Endothelial cell of umbilical vein (primary cell): ENCODE measurements at regions of chrX and their contacts with region 1.

Region 1: GRCh38 chrX:71532753-71533425 is at the start of gene OGT:
- DNase-seq: peak; percentile 93
- H3K4me3 ChIP-seq: peak within 1 kb of the TSS; percentile 56 to 89 (median 59)
- H3K27ac ChIP-seq: peak within 1 kb of the TSS; percentile 63
- H3K4me1 ChIP-seq: peaks cover 11% of the 10 kb centered on the region
- H3K27me3 ChIP-seq: no peaks in the 10 kb centered on the region
- CTCF ChIP-seq: no peak
- POLR2A ChIP-seq: peak; percentile 80
- total RNA-seq, gene OGT: 128 and 129 TPM in 2 replicates

Region 2: GRCh38 chrX:71492231-71493065 is 40.4 kb before region 1 on chrX:
- CTCF ChIA-PET with region 1: no interaction called
- POLR2A ChIA-PET with region 1: no interaction called
- dilution Hi-C with region 1: no loop called
- intact Hi-C with region 1: loop called (anchors 2 kb)
- DNase-seq: peak; percentile 40
- H3K4me3 ChIP-seq: peak overlapping the region; percentile 48 to 65 (median 58)
- H3K27ac ChIP-seq: no peak overlapping the region
- H3K4me1 ChIP-seq: peaks cover 4% of the 10 kb centered on the region
- H3K27me3 ChIP-seq: no peaks in the 10 kb centered on the region
- CTCF ChIP-seq: no peak
- POLR2A ChIP-seq: no peak

Region 3: GRCh38 chrX:71612256-71612655 is 79.4 kb after region 1 on chrX:
- CTCF ChIA-PET with region 1: no interaction called
- POLR2A ChIA-PET with region 1: no interaction called
- dilution Hi-C with region 1: no loop called
- intact Hi-C with region 1: loop called (anchors 5 kb)
- DNase-seq: peak; percentile 85
- H3K4me3 ChIP-seq: no peak overlapping the region
- H3K27ac ChIP-seq: peak overlapping the region; percentile 78
- H3K4me1 ChIP-seq: peaks cover 10% of the 10 kb centered on the region
- H3K27me3 ChIP-seq: no peaks in the 10 kb centered on the region
- CTCF ChIP-seq: no peak
- POLR2A ChIP-seq: no peak